ENCODE measurements at regions of chr19 and their contacts with region 1.

Region 1: GRCh38 chr19:46542428-46543230 is 47.0 kb upstream of the PNMA8B start:
- DNase-seq: peak; percentile 68
- H3K27ac ChIP-seq: no peak overlapping the region
- CTCF ChIP-seq: peak; percentile 84

Region 2: DNA sequence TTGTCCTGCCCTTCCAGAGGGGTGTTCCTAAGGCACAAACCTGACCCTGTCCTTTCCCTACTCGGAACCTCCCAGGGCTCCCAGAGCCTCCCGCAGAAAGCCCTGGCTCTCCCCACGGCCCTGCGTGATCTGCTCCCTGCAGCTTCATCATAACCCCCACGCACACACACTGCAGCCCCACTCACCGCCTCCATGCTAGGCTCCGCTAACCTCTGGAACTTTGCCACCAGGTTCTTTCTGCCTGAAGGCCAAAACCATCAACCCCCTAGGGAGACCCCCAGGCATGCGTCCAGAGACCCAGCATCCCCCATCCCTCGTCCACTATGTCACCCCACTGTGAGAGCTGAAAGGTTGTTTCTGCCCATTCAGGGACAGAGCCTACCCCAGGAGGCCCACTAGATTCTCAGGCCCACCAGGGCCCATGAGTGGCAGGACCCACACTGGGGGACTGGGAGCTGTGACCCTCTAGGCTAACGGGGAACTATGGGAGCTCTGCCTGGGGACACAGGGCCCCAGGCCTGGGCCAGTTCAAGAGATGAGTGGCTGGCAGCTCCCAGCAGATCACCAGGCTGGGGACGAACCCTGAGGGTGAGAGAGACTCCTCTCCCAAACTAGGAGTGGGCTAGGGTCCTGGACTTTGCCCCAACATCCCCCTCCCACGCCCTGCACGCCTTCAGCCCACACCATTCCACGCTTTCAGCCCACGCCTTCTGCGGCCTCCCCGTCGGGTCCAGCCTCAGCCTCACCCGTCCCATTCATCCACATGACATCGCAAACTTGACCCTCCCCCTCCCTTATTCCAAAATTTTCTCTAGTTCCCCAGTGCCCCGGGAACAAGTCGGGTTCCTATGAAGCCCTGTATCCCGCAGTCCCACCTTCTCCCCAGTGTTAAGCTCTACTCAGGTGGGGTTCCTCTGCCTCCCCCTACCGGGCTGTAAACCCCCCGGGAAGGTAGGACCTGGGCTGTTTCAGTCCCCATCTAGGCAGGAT is 13.7 kb before region 1 on chr19:
- CTCF ChIA-PET with region 1: interaction called, 10 read pairs
- POLR2A ChIA-PET with region 1: no interaction called
- DNase-seq: no peak
- H3K27ac ChIP-seq: no peak overlapping the region
- CTCF ChIP-seq: no peak

Measured in RWPE1 (cell line).